ENCODE measurements at regions of chr2 and their contacts with region 1.

Region 1: GRCh38 chr2:88880441-88880953 is 189.0 kb downstream of the RPIA start:
- DNase-seq: no peak
- ATAC-seq: peak; percentile 75
- H3K4me3 Mint-ChIP-seq: peak overlapping the region; percentile 74
- H3K27ac Mint-ChIP-seq: peak overlapping the region; percentile 84
- H3K4me1 Mint-ChIP-seq: peaks cover 70% of the 10 kb centered on the region
- H3K27me3 Mint-ChIP-seq: no peaks in the 10 kb centered on the region
- CTCF ChIP-seq: no peak

Region 2: GRCh38 chr2:88739985-88740600 is 140.4 kb before region 1 on chr2:
- CTCF ChIA-PET with region 1: interaction called, 12 read pairs
- POLR2A ChIA-PET with region 1: no interaction called
- intact Hi-C with region 1: loop called (anchors 5 kb)
- DNase-seq: peak; percentile 62
- ATAC-seq: peak; percentile 96
- H3K4me3 Mint-ChIP-seq: no peak overlapping the region
- H3K27ac Mint-ChIP-seq: peak overlapping the region; percentile 26
- H3K4me1 Mint-ChIP-seq: peaks cover 6% of the 10 kb centered on the region
- H3K27me3 Mint-ChIP-seq: no peaks in the 10 kb centered on the region
- CTCF ChIP-seq: peak; percentile 77

Region 3: DNA sequence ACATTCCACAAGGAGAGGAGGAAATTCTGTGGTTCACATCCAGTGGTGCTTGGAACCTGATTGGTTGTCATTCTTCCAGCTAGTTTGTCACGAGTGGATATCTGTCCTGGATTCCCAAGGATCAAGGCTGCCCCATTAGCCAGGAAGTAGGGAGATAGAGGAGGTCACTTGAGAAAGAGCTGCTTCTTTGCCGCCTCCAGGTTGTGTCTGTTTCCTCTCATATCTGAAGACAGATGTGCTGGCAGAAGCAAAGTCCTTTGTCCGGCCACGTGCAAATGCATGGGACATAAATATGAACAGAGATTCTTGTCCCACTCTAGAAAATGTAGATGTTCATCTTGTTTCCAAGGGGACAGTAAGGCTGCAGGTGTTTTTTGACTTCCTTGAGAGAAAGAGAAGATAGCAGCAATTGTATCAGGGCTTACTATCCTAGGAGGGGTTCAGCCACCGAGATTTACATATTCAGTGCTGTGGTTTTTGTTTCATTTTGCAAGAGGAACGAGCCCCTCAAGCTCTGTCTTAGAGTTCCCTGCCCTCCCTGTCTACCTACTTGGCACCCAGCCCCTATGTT is 14.6 kb before region 1 on chr2:
- CTCF ChIA-PET with region 1: interaction called, 6 read pairs
- POLR2A ChIA-PET with region 1: interaction called, 79 read pairs
- intact Hi-C with region 1: loop called (anchors 2 kb)
- DNase-seq: no peak
- ATAC-seq: peak; percentile 79
- H3K4me3 Mint-ChIP-seq: peak overlapping the region; percentile 91
- H3K27ac Mint-ChIP-seq: peak overlapping the region; percentile 91
- H3K4me1 Mint-ChIP-seq: peaks cover 45% of the 10 kb centered on the region
- H3K27me3 Mint-ChIP-seq: no peaks in the 10 kb centered on the region
- CTCF ChIP-seq: no peak

Region 4: GRCh38 chr2:88903749-88904353 is 23.4 kb after region 1 on chr2:
- CTCF ChIA-PET with region 1: interaction called, 21 read pairs
- POLR2A ChIA-PET with region 1: interaction called, 17 read pairs
- intact Hi-C with region 1: no loop called
- DNase-seq: no peak
- ATAC-seq: peak; percentile 81
- H3K4me3 Mint-ChIP-seq: no peak overlapping the region
- H3K27ac Mint-ChIP-seq: no peak overlapping the region
- H3K4me1 Mint-ChIP-seq: peaks cover 4% of the 10 kb centered on the region
- H3K27me3 Mint-ChIP-seq: no peaks in the 10 kb centered on the region
- CTCF ChIP-seq: no peak

Region 5: DNA sequence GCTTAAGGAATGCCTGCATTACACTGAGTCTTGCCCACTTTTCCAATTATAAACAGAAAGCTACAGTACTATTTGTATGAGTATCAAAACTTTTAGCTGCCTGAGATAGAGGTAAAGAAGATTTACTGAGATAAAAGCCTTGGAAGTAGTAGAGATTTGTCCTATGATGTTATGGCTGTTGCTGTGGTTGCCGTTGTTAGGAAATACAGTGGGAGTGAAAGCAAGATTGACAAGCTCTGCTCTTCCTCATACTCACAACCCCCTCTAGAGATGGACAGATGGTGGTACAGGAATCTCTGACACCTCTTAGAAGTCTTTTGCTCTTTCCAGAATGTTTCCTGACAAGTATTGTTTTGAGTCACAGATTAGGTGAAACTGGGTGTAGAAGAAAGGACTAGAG is 53.5 kb after region 1 on chr2:
- CTCF ChIA-PET with region 1: interaction called, 9 read pairs
- POLR2A ChIA-PET with region 1: no interaction called
- intact Hi-C with region 1: loop called (anchors 5 kb)
- DNase-seq: no peak
- ATAC-seq: no peak
- H3K4me3 Mint-ChIP-seq: no peak overlapping the region
- H3K27ac Mint-ChIP-seq: no peak overlapping the region
- H3K4me1 Mint-ChIP-seq: peaks cover 13% of the 10 kb centered on the region
- H3K27me3 Mint-ChIP-seq: no peaks in the 10 kb centered on the region
- CTCF ChIP-seq: no peak

Region 6: GRCh38 chr2:88959480-88960220 is 79.2 kb after region 1 on chr2:
- CTCF ChIA-PET with region 1: no interaction called
- POLR2A ChIA-PET with region 1: no interaction called
- intact Hi-C with region 1: no loop called
- DNase-seq: no peak
- ATAC-seq: no peak
- H3K4me3 Mint-ChIP-seq: no peak overlapping the region
- H3K27ac Mint-ChIP-seq: no peak overlapping the region
- H3K4me1 Mint-ChIP-seq: no peaks in the 10 kb centered on the region
- H3K27me3 Mint-ChIP-seq: no peaks in the 10 kb centered on the region
- CTCF ChIP-seq: no peak

Region 7: GRCh38 chr2:89000235-89000634 is 119.7 kb after region 1 on chr2:
- CTCF ChIA-PET with region 1: no interaction called
- POLR2A ChIA-PET with region 1: no interaction called
- intact Hi-C with region 1: no loop called
- DNase-seq: no peak
- ATAC-seq: no peak
- H3K4me3 Mint-ChIP-seq: no peak overlapping the region
- H3K27ac Mint-ChIP-seq: no peak overlapping the region
- H3K4me1 Mint-ChIP-seq: no peaks in the 10 kb centered on the region
- H3K27me3 Mint-ChIP-seq: no peaks in the 10 kb centered on the region
- CTCF ChIP-seq: no peak